HCT116 (cell line): ENCODE measurements at regions of chr9 and their contacts with region 1.

Region 1: GRCh38 chr9:37913480-37914153 is 9.7 kb upstream of the SLC25A51 start:
- DNase-seq: peak; percentile 71
- ATAC-seq: peak; percentile 94
- H3K4me3 ChIP-seq: no peak overlapping the region
- H3K27ac ChIP-seq: no peak overlapping the region; the same call in 1 of the 2 replicates
- H3K4me1 ChIP-seq: peaks cover 0 to 5% of the 10 kb centered on the region in 2 experiments; a peak in 1 of 4 replicates
- H3K27me3 ChIP-seq: no peaks in the 10 kb centered on the region
- CTCF ChIP-seq: peak; percentile 96 to 99 (median 98)
- POLR2A ChIP-seq: no peak
- RAD21 ChIP-seq: peak; percentile 100

Region 2: GRCh38 chr9:37953775-37954437 is 40.3 kb after region 1 on chr9:
- CTCF ChIA-PET with region 1: no interaction called
- POLR2A ChIA-PET with region 1: interaction called, 4 read pairs
- RAD21 ChIA-PET with region 1: no interaction called
- intact Hi-C with region 1: loop called (anchors 5 kb)
- DNase-seq: peak; percentile 87
- ATAC-seq: peak; percentile 73
- H3K4me3 ChIP-seq: peak overlapping the region; percentile 15 to 45; a peak in 3 of 4 replicates
- H3K27ac ChIP-seq: peak overlapping the region; percentile 84
- H3K4me1 ChIP-seq: peaks cover 44 to 87% of the 10 kb centered on the region in 2 experiments
- H3K27me3 ChIP-seq: no peaks in the 10 kb centered on the region
- CTCF ChIP-seq: no peak
- POLR2A ChIP-seq: no peak
- RAD21 ChIP-seq: no peak

Region 3: GRCh38 chr9:37998881-37999587 is 85.4 kb after region 1 on chr9:
- CTCF ChIA-PET with region 1: interaction called, 10 read pairs
- POLR2A ChIA-PET with region 1: no interaction called
- RAD21 ChIA-PET with region 1: no interaction called
- intact Hi-C with region 1: no loop called
- DNase-seq: peak; percentile 31
- ATAC-seq: peak; percentile 86
- H3K4me3 ChIP-seq: peak overlapping the region in 1 of 2 experiments; percentile 25; a peak in 2 of 4 replicates
- H3K27ac ChIP-seq: peak overlapping the region; percentile 53
- H3K4me1 ChIP-seq: peaks cover 22 to 82% of the 10 kb centered on the region in 2 experiments
- H3K27me3 ChIP-seq: no peaks in the 10 kb centered on the region
- CTCF ChIP-seq: no peak
- POLR2A ChIP-seq: no peak
- RAD21 ChIP-seq: no peak

Region 4: DNA sequence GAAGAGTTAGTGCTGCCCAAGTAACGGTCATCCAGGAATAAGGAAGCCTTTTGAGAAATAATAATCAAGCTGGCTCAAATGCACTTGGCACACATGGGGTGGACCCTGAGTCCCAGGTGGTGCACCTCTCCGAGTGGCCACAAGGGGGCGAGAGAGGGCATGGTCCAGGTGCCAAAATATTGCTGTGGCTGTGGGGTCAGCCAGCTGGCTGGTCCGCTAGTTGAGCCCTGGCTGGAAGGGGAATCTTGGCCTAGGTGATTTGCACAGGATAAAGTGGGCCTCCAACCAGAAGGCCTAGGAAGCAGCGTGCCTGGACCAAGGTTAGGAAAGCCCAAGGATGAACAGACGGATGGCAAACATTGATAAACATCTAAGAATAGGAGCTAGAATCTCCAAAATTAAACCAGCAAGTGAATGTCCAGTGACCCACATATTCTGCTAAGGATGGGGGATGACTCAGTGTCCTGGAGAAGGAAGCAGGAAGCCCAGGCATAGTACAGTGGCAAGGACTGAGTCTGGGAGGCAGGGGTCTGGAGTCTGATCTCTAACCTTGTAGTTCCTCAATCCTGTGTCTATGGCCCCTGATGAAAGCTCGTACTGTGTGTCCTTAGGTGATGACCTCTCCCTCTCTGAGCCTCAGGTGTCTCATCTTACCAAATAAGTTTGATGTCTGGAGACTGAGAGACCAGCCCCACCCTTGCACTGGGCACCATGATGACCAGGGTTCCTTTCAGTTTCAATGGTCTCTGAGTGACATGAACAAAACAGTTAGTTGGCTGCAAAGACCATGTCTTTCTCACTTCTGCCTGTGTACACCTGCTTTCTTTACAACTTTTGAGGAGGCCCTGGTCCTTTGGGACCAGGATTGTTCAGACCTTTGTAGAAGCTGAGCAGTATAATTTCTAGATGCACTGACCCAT is 174.6 kb after region 1 on chr9:
- CTCF ChIA-PET with region 1: interaction called, 27 read pairs
- POLR2A ChIA-PET with region 1: no interaction called
- RAD21 ChIA-PET with region 1: interaction called, 4 to 5 read pairs
- intact Hi-C with region 1: loop called (anchors 2 kb)
- DNase-seq: peak; percentile 24
- ATAC-seq: peak; percentile 93
- H3K4me3 ChIP-seq: no peak overlapping the region
- H3K27ac ChIP-seq: no peak overlapping the region
- H3K4me1 ChIP-seq: peaks cover 0 to 2% of the 10 kb centered on the region in 2 experiments; a peak in 1 of 4 replicates
- H3K27me3 ChIP-seq: no peaks in the 10 kb centered on the region
- CTCF ChIP-seq: peak; percentile 78 to 99 (median 97)
- POLR2A ChIP-seq: no peak
- RAD21 ChIP-seq: peak; percentile 79

Region 5: GRCh38 chr9:38263532-38263931 is 349.9 kb after region 1 on chr9:
- CTCF ChIA-PET with region 1: interaction called, 54 read pairs
- POLR2A ChIA-PET with region 1: no interaction called
- RAD21 ChIA-PET with region 1: interaction called in 1 of 2 experiments, 4 read pairs
- intact Hi-C with region 1: loop called (anchors 1 kb)
- DNase-seq: peak; percentile 7
- ATAC-seq: peak; percentile 46; the same call in 1 of the 2 replicates
- H3K4me3 ChIP-seq: no peak overlapping the region
- H3K27ac ChIP-seq: no peak overlapping the region
- H3K4me1 ChIP-seq: no peaks in the 10 kb centered on the region
- H3K27me3 ChIP-seq: no peaks in the 10 kb centered on the region
- CTCF ChIP-seq: peak in 2 of 3 experiments; percentile 40 to 72; a peak in 3 of 6 replicates
- POLR2A ChIP-seq: no peak
- RAD21 ChIP-seq: peak; percentile 86